ENCODE measurements at regions of chr1 and their contacts with region 1.

Region 1: DNA sequence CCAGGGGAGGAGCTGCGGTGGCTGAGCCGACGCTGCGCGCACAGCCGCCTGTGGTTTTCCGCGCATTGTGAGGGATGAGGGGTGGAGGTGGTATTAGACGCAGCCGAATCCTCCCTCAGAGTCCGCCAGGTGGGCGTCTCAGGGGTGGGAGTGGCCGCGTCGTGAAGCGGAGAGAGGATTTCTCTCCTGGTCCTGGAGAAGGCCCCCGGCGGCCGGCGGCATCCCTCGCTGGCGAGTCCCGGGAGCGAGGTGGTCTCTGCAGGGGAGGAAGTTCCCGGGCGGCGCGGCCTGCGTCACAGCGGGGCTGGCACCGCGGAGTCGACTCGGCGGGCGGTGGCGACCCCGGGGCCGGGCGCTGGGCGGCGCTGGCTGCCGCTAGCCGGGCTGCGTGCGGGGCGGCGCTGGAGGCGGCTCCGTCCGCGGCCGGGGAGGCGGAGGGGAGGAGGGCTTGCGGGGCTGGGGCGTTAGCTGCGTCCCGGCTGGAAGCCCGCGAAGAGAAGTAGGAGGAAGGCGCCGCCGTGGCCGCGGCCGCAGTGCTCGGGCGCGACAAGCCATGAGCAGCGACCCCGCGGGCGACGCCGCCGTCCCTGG is at the start of gene LRRC8C:
- DNase-seq: peak; percentile 86
- H3K4me3 ChIP-seq: peak within 1 kb of the TSS; percentile 51 to 93 (median 64)
- H3K27ac ChIP-seq: peak within 1 kb of the TSS; percentile 70 to 88 (median 76)
- H3K4me1 ChIP-seq: peaks cover 0 to 12% (median 8%) of the 10 kb centered on the region in 4 donors
- H3K27me3 ChIP-seq: no peaks in the 10 kb centered on the region
- CTCF ChIP-seq: peak in 1 of 4 experiments; percentile 28
- EP300 ChIP-seq: no peak
- POLR2A ChIP-seq: no peak
- total RNA-seq, gene LRRC8C: 3.5 to 7.8 (median 5.1) TPM

Region 2: GRCh38 chr1:89578151-89578550 is 54.6 kb before region 1 on chr1:
- intact Hi-C with region 1: no loop called
- DNase-seq: no peak
- H3K4me3 ChIP-seq: no peak overlapping the region
- H3K27ac ChIP-seq: no peak overlapping the region
- H3K4me1 ChIP-seq: no peaks in the 10 kb centered on the region
- H3K27me3 ChIP-seq: no peaks in the 10 kb centered on the region
- CTCF ChIP-seq: no peak
- EP300 ChIP-seq: no peak
- POLR2A ChIP-seq: no peak

Region 3: DNA sequence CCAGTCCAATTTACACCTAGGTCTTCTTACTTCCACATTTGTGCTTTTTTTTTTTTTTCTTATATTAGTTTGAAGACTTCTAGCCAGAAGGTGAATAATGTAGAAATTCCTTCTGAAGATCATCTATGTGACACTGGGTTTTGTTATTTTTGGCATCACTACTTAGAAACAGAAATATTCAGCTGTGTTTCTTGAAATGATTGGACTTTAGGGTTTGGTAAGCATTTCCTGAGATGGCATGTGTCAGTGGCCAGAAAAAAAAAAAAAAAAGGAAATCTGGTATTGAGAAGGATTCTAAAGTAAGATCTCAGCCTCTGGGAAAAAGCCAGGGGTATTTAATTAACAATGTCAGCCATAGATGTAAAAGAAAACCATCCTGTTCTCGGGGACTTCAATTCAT is 43.2 kb before region 1 on chr1:
- intact Hi-C with region 1: no loop called
- DNase-seq: no peak
- H3K4me3 ChIP-seq: no peak overlapping the region
- H3K27ac ChIP-seq: no peak overlapping the region
- H3K4me1 ChIP-seq: no peaks in the 10 kb centered on the region
- H3K27me3 ChIP-seq: no peaks in the 10 kb centered on the region
- CTCF ChIP-seq: no peak
- EP300 ChIP-seq: no peak
- POLR2A ChIP-seq: no peak

Region 4: GRCh38 chr1:89762779-89763648 is 130.3 kb after region 1 on chr1:
- intact Hi-C with region 1: loop called (anchors 2 kb)
- DNase-seq: peak; percentile 90
- H3K4me3 ChIP-seq: peak overlapping the region; percentile 23 to 51 (median 42)
- H3K27ac ChIP-seq: peak overlapping the region in 3 of 4 donors; percentile 30 to 53 (median 32)
- H3K4me1 ChIP-seq: peaks cover 0 to 11% (median 5%) of the 10 kb centered on the region in 4 donors
- H3K27me3 ChIP-seq: no peaks in the 10 kb centered on the region
- CTCF ChIP-seq: peak; percentile 68 to 96 (median 90)
- EP300 ChIP-seq: no peak
- POLR2A ChIP-seq: no peak

Measured in sigmoid colon (tissue), 7 donors.